Activated naive CD4-positive, alpha-beta T cell treated with anti-CD3 and anti-CD28 coated beads for 36 hours (primary cell): ENCODE measurements at regions of chr10 and their contacts with region 1.

Region 1: GRCh38 chr10:102394079-102394800 is 1.3 kb upstream of the NFKB2 start:
- DNase-seq: peak; percentile 99
- H3K4me3 Mint-ChIP-seq: peak overlapping the region; percentile 87
- H3K27ac Mint-ChIP-seq: peak overlapping the region; percentile 99
- H3K4me1 Mint-ChIP-seq: peaks cover 44% of the 10 kb centered on the region
- H3K27me3 Mint-ChIP-seq: no peaks in the 10 kb centered on the region

Region 2: GRCh38 chr10:102114861-102115618 is 279.2 kb before region 1 on chr10:
- CTCF ChIA-PET with region 1: interaction called, 4 read pairs
- intact Hi-C with region 1: loop called (anchors 1 kb)
- DNase-seq: peak; percentile 92
- H3K4me3 Mint-ChIP-seq: peak overlapping the region; percentile 93
- H3K27ac Mint-ChIP-seq: peak overlapping the region; percentile 98
- H3K4me1 Mint-ChIP-seq: peaks cover 53% of the 10 kb centered on the region
- H3K27me3 Mint-ChIP-seq: no peaks in the 10 kb centered on the region

Region 3: DNA sequence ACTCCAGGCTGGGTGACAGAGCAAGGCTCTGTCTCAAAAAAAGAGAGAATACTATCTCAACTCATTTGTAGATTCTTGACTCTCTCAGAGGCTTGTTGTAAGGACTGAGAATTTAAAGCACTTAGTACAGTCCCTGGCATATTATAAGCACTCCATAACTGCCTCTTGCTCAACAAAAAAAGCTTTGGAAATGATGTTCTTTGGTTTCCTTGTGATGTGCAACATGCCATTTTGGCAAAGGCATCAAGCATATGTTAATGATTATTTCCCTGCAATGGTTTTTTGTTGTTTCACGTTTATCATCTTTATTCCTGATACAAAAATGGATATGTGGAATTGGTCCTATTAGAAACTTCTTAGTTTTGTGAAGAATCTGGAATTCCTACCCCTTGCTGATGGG is 226.4 kb before region 1 on chr10:
- CTCF ChIA-PET with region 1: interaction called, 7 read pairs
- intact Hi-C with region 1: loop called (anchors 5 kb)
- DNase-seq: no peak
- H3K4me3 Mint-ChIP-seq: no peak overlapping the region
- H3K27ac Mint-ChIP-seq: no peak overlapping the region
- H3K4me1 Mint-ChIP-seq: peaks cover 10% of the 10 kb centered on the region
- H3K27me3 Mint-ChIP-seq: no peaks in the 10 kb centered on the region

Region 4: GRCh38 chr10:102352066-102352715 is 42.0 kb before region 1 on chr10:
- CTCF ChIA-PET with region 1: interaction called, 11 read pairs
- intact Hi-C with region 1: no loop called
- DNase-seq: peak; percentile 87
- H3K4me3 Mint-ChIP-seq: no peak overlapping the region
- H3K27ac Mint-ChIP-seq: no peak overlapping the region
- H3K4me1 Mint-ChIP-seq: no peaks in the 10 kb centered on the region
- H3K27me3 Mint-ChIP-seq: no peaks in the 10 kb centered on the region

Region 5: GRCh38 chr10:102420810-102421644 is 26.8 kb after region 1 on chr10 and contains the start of gene FBXL15:
- CTCF ChIA-PET with region 1: interaction called, 46 read pairs
- intact Hi-C with region 1: loop called (anchors 1 kb)
- DNase-seq: peak; percentile 98
- H3K4me3 Mint-ChIP-seq: peak within 1 kb of the TSS; percentile 95
- H3K27ac Mint-ChIP-seq: peak within 1 kb of the TSS; percentile 91
- H3K4me1 Mint-ChIP-seq: peaks cover 30% of the 10 kb centered on the region
- H3K27me3 Mint-ChIP-seq: peaks cover 20% of the 10 kb centered on the region
- total RNA-seq, gene FBXL15: 9.9 to 10.8 TPM

Region 6: GRCh38 chr10:102461187-102462054 is 67.2 kb after region 1 on chr10:
- CTCF ChIA-PET with region 1: interaction called, 4 read pairs
- intact Hi-C with region 1: loop called (anchors 1 kb)
- DNase-seq: peak; percentile 94
- H3K4me3 Mint-ChIP-seq: peak overlapping the region; percentile 88
- H3K27ac Mint-ChIP-seq: peak overlapping the region; percentile 73
- H3K4me1 Mint-ChIP-seq: peaks cover 23% of the 10 kb centered on the region
- H3K27me3 Mint-ChIP-seq: no peaks in the 10 kb centered on the region

Region 7: GRCh38 chr10:102615361-102615760 is 221.1 kb after region 1 on chr10:
- CTCF ChIA-PET with region 1: no interaction called
- intact Hi-C with region 1: no loop called
- DNase-seq: peak; percentile 45
- H3K4me3 Mint-ChIP-seq: no peak overlapping the region
- H3K27ac Mint-ChIP-seq: no peak overlapping the region
- H3K4me1 Mint-ChIP-seq: peaks cover 29% of the 10 kb centered on the region
- H3K27me3 Mint-ChIP-seq: no peaks in the 10 kb centered on the region

Region 8: DNA sequence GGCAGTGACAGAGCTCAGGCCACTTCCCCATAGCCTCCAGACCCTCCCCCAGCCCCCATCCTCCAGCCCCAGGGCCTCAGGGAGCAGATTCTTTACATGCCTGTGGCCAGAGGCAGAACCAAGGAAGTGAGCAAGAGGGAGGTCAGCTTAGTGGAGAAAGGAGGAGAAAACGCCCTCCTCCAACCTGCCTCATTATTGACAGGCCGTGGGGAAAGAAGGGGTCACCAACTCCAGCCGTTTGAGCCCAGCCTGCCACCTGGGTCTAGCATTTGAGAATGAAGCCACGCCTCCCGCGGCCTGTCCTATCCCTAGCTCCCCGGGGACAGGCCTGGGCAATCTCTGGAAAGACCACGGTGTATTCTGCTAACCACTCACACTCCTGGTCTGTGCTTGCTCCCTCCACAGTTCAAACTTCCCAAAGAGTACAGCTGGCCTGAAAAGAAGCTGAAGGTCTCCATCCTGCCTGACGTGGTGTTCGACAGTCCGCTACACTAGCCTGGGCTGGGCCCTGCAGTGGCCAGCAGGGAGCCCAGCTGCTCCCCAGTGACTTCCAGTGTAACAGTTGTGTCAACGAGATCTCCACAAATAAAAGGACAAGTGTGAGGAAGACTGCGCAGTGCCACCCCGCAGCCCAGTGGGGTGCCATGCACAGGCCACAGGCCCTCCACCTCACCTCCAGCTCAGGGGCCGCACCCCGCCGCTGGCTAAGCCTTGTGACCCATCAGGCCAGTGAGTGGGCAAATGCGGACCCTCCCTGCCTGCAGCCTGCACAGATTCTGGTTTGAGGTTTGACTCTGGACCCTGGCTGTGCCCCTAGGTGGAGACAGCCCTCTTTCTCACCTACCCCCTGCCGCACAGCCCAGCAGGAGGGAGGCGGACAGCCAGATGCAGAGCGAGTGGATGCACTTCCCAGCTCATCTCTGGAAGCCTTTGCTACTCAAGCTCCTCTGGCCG is 235.7 kb after region 1 on chr10:
- CTCF ChIA-PET with region 1: no interaction called
- intact Hi-C with region 1: no loop called
- DNase-seq: no peak
- H3K4me3 Mint-ChIP-seq: no peak overlapping the region
- H3K27ac Mint-ChIP-seq: no peak overlapping the region
- H3K4me1 Mint-ChIP-seq: peaks cover 32% of the 10 kb centered on the region
- H3K27me3 Mint-ChIP-seq: no peaks in the 10 kb centered on the region

Region 9: GRCh38 chr10:102641880-102642735 is 247.9 kb after region 1 on chr10:
- CTCF ChIA-PET with region 1: no interaction called
- intact Hi-C with region 1: loop called (anchors 1 kb)
- DNase-seq: peak; percentile 99
- H3K4me3 Mint-ChIP-seq: peak overlapping the region; percentile 83
- H3K27ac Mint-ChIP-seq: peak overlapping the region; percentile 88
- H3K4me1 Mint-ChIP-seq: peaks cover 18% of the 10 kb centered on the region
- H3K27me3 Mint-ChIP-seq: no peaks in the 10 kb centered on the region